ENCODE measurements at regions of chr6 and their contacts with region 1.

Region 1: GRCh38 chr6:149565527-149566409 is at the start of gene GINM1:
- H3K4me3 Mint-ChIP-seq: peak within 1 kb of the TSS; percentile 96
- H3K27ac Mint-ChIP-seq: peak within 1 kb of the TSS; percentile 88
- H3K4me1 Mint-ChIP-seq: peaks cover 6% of the 10 kb centered on the region
- H3K27me3 Mint-ChIP-seq: peaks cover 13% of the 10 kb centered on the region

Region 2: GRCh38 chr6:149545754-149546528 is 19.8 kb before region 1 on chr6 and contains the start of gene PPIL4:
- intact Hi-C with region 1: loop called (anchors 1 kb)
- H3K4me3 Mint-ChIP-seq: peak within 1 kb of the TSS; percentile 93
- H3K27ac Mint-ChIP-seq: peak within 1 kb of the TSS; percentile 96
- H3K4me1 Mint-ChIP-seq: peaks cover 35% of the 10 kb centered on the region
- H3K27me3 Mint-ChIP-seq: peaks cover 10% of the 10 kb centered on the region

Region 3: DNA sequence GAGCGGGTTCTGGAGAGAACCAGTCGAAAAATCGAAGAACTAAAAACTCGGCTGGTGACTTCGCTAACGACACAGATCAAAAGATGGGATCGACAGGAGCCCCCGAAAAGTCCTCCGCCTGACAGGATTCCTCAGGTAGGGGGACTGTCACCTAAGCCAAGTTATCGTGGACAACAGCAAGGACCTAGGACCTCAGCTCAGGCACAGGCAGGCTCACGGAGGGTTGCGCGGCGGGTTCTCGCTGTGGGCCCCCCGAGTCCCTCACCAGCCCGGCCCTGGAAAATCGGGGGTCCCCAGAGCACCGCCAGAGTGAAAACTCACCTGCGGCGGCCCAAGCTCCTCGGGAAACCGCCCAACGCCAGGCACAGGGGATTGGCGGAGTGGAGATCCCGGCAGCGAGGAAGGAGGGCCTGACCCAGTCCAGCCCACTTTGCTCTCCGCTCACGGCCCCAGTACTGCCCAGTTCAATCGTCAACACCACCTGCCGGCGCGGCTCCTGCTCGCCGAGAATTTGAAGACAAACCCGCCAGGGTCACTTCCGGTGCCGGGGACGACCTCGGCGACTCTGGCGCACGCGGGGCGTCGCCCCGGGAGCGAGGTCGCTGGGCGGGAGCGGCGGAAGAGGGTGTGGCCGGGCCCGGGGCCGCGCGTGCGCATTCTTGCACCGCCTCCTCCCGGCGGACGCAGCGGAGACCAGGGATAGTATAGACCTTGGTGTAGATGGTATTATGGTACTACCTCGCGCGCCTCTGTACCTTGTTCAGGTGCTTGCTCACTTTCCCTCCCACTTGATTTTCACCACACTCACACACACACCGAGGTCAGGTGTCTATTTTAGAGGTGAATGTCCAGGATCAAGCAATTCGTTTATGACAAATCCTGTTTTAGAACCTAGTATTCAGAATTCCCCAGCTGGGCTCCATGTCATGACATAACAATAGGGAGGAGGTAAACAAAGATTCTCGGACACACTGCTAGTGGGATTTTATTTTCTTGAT is 82.7 kb after region 1 on chr6 and contains the start of gene KATNA1:
- intact Hi-C with region 1: loop called (anchors 5 kb)
- H3K4me3 Mint-ChIP-seq: peak within 1 kb of the TSS; percentile 87
- H3K27ac Mint-ChIP-seq: peak within 1 kb of the TSS; percentile 91
- H3K4me1 Mint-ChIP-seq: peaks cover 18% of the 10 kb centered on the region
- H3K27me3 Mint-ChIP-seq: no peaks in the 10 kb centered on the region

Region 4: GRCh38 chr6:149717588-149718458 is 152.1 kb after region 1 on chr6 and contains the start of gene LATS1:
- intact Hi-C with region 1: loop called (anchors 2 kb)
- H3K4me3 Mint-ChIP-seq: peak within 1 kb of the TSS; percentile 99
- H3K27ac Mint-ChIP-seq: peak within 1 kb of the TSS; percentile 97
- H3K4me1 Mint-ChIP-seq: peaks cover 13% of the 10 kb centered on the region
- H3K27me3 Mint-ChIP-seq: no peaks in the 10 kb centered on the region

Measured in dendritic cell treated with granulocyte-macrophage colony-stimulating factor and Interleukin-4, amounts not matched to agents 40 ng/mL and 50 ng/mL, for 4 days (primary cell).